ENCODE measurements at regions of chr5 and their contacts with region 1.

Region 1: GRCh38 chr5:53481887-53482716 is 1.7 kb downstream of the FST start:
- DNase-seq: peak; percentile 78
- H3K4me3 ChIP-seq: peak overlapping the region; percentile 85 to 97 (median 96)
- H3K27ac ChIP-seq: peak overlapping the region; percentile 98
- H3K4me1 ChIP-seq: peaks cover 27% of the 10 kb centered on the region
- H3K27me3 ChIP-seq: no peaks in the 10 kb centered on the region
- CTCF ChIP-seq: no peak

Region 2: GRCh38 chr5:53170748-53171349 is 311.3 kb before region 1 on chr5:
- CTCF ChIA-PET with region 1: no interaction called
- dilution Hi-C with region 1: no loop called
- in situ Hi-C with region 1: no loop called
- intact Hi-C with region 1: loop called (anchors 2 kb)
- DNase-seq: peak; percentile 52
- H3K4me3 ChIP-seq: no peak overlapping the region
- H3K27ac ChIP-seq: peak overlapping the region; percentile 51
- H3K4me1 ChIP-seq: no peaks in the 10 kb centered on the region
- H3K27me3 ChIP-seq: no peaks in the 10 kb centered on the region
- CTCF ChIP-seq: peak; percentile 77 to 78

Region 3: GRCh38 chr5:53335115-53335514 is 147.0 kb before region 1 on chr5:
- CTCF ChIA-PET with region 1: no interaction called
- dilution Hi-C with region 1: loop called (anchors 10 kb)
- in situ Hi-C with region 1: loop called in 1 of 2 experiments (anchors 10 kb)
- intact Hi-C with region 1: loop called (anchors 2 kb)
- DNase-seq: peak; percentile 50
- H3K4me3 ChIP-seq: no peak overlapping the region
- H3K27ac ChIP-seq: peak overlapping the region; percentile 100
- H3K4me1 ChIP-seq: peaks cover 87% of the 10 kb centered on the region
- H3K27me3 ChIP-seq: no peaks in the 10 kb centered on the region
- CTCF ChIP-seq: peak; percentile 19 to 40

Region 4: DNA sequence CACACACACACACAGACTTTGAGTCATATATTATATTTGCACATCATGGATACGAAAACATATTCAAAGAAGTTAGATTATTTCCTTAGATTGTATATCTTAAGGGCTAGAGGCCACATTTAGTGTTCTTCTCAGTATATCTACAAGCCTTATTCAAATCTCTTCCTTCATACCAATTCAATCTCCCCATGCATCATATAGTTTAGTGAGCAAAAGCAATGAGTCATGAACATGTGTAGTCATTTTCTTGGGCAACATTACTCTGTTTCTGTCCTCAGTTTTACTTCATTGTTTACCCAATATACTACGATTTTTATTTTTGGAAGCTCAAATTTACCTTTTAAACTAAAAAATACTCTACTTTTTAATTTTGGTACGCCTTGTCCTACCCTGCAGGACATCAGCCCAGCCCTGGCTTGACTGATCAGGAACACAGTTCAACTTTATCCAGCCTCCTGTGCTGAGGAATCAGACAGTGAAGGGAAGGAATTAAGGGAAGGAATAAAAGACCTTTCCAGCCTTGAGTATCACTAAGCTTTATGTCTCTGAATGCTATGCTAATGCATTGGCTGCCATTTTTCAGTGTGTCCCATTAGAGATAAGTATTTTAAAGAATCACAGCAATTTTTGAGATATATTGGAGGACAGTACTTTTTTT is 103.4 kb before region 1 on chr5:
- CTCF ChIA-PET with region 1: no interaction called
- dilution Hi-C with region 1: no loop called
- in situ Hi-C with region 1: no loop called
- intact Hi-C with region 1: no loop called
- DNase-seq: peak; percentile 76
- H3K4me3 ChIP-seq: no peak overlapping the region
- H3K27ac ChIP-seq: peak overlapping the region; percentile 81
- H3K4me1 ChIP-seq: peaks cover 16% of the 10 kb centered on the region
- H3K27me3 ChIP-seq: no peaks in the 10 kb centered on the region
- CTCF ChIP-seq: no peak

Region 5: DNA sequence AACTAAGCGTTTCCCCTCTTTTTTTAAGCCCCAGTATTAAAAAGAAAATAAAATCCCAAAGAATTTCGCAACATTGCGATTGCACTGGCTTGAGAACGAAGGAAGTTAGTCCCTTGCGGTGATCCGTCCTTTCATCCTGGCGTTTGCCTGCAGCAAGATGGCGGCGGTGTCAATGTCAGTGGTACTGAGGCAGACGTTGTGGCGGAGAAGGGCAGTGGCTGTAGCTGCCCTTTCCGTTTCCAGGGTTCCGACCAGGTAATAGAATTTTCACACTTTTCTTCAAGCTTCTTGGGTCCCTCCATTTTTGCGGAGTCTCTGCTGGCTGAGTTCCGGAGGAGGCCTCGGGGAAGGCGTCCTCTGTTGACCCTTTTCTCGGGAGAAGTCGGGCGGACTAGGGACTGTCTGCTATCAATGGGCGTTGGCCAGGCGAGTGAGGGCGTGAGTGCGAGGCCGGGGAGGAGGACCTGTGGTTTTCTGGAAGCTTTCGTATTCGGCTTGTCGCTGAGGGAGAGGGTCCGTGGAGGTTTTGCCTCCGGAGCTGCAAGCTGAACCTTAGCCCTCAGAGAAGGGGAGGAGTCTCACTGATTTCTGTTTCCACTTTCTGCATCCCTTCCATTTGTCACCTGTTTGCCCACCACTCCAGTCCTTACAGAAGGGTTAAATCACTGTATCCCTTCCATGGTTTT is 78.5 kb after region 1 on chr5 and contains the start of gene NDUFS4:
- CTCF ChIA-PET with region 1: no interaction called
- dilution Hi-C with region 1: no loop called
- in situ Hi-C with region 1: no loop called
- intact Hi-C with region 1: loop called (anchors 2 kb)
- DNase-seq: peak; percentile 83
- H3K4me3 ChIP-seq: peak within 1 kb of the TSS; percentile 62 to 81 (median 71)
- H3K27ac ChIP-seq: peak within 1 kb of the TSS; percentile 56
- H3K4me1 ChIP-seq: peaks cover 5% of the 10 kb centered on the region
- H3K27me3 ChIP-seq: no peaks in the 10 kb centered on the region
- CTCF ChIP-seq: no peak
- total RNA-seq, gene NDUFS4: 55.2 to 95.3 TPM

Region 6: DNA sequence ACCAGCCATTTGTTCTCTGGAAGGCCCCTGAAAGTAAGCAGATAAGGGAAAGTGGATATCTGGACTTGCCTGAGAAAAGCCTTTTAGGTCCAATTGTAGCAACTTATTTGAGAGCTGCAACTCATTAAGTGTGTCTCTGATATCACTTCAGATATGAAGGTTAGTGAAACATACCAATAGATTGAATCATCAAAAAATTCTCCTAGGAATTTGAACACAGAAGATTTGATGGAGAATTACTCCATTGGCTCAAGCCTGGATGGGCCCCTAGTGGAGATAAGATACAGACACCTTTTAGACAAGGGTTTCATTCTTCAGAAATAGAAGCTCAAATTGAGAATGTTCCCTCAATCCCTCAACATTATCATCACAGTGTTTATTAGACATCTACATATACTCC is 435.0 kb after region 1 on chr5:
- CTCF ChIA-PET with region 1: no interaction called
- dilution Hi-C with region 1: no loop called
- in situ Hi-C with region 1: no loop called
- intact Hi-C with region 1: loop called (anchors 2 kb)
- DNase-seq: peak; percentile 14
- H3K4me3 ChIP-seq: no peak overlapping the region
- H3K27ac ChIP-seq: no peak overlapping the region
- H3K4me1 ChIP-seq: peaks cover 3% of the 10 kb centered on the region
- H3K27me3 ChIP-seq: no peaks in the 10 kb centered on the region
- CTCF ChIP-seq: peak; percentile 35

Region 7: DNA sequence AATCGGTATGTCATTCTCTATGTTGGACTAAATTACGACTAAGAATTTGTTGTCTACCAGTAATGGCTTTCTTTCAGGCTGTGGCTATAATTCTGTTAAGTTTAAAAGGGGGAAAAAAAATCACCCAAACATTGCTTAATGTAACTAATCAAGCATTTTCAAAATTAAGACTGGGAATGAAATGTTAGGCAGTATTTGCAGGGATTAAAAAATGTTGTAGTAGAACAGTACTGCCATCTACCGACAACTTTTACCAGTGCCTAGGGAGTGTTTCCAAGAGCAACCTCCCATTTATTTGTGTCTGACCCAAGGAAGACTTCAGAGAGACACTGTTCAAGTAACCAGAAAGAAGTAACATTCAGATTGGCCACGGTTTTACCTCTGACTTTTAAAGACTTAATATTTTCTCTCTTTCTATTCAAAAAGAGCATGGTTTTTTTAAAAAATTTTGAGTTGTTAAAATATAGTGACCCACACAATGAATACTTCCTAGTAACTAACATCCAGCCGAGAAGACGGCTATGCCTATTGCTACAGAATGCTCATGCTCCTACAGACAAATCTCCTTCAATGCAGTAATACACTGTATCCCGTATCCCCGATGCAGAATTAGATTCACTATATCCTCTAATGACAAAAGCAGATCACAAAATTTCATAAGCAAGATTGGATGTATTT is 735.9 kb after region 1 on chr5:
- CTCF ChIA-PET with region 1: no interaction called
- dilution Hi-C with region 1: no loop called
- in situ Hi-C with region 1: loop called in 1 of 2 experiments (anchors 10 kb)
- intact Hi-C with region 1: loop called (anchors 1 kb)
- DNase-seq: peak; percentile 42
- H3K4me3 ChIP-seq: no peak overlapping the region
- H3K27ac ChIP-seq: no peak overlapping the region
- H3K4me1 ChIP-seq: no peaks in the 10 kb centered on the region
- H3K27me3 ChIP-seq: no peaks in the 10 kb centered on the region
- CTCF ChIP-seq: peak; percentile 82 to 83